HepG2 (cell line): ENCODE measurements at regions of chr14 and their contacts with region 1.

Region 1: DNA sequence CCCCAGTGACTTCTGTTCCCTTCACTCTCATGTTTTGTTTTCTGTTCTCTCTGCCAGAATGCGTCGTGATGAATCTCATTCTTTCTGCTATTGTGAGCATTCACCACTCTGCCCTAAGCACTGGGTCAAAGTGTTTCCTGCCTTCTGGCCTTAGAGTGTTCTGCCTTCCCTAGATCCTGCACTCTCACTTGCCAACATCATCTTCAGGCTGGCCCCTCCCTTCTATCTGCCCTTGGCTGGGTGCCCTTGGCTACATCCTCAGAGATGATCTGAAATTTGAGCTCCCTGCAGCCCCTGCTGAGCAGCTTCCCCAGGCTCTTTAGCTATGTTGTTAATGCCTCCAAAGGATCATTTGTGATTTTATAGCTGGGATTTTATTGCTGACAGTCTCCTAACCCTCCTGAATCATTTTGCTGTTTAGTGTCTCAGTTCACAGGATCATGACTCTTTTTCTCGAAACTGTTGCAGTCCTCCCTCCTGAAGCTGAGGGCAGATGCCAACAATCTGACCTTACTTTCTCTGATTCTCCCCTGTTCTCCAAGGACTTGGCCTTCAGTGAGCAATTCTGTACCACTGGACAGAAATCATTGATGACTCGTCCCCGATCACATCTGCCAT is 4.5 kb downstream of the DHRS2 start:
- DNase-seq: peak; percentile 54
- ATAC-seq: no peak
- H3K4me3 ChIP-seq: peak overlapping the region in 1 of 3 experiments; percentile 74; a peak in 1 of 6 replicates
- H3K27ac ChIP-seq: peak overlapping the region; percentile 59
- H3K4me1 ChIP-seq: peaks cover 65% of the 10 kb centered on the region
- H3K27me3 ChIP-seq: no peaks in the 10 kb centered on the region; a peak in 1 of 5 replicates
- CTCF ChIP-seq: no peak
- EP300 ChIP-seq: no peak
- POLR2A ChIP-seq: peak in 1 of 2 experiments; percentile 77; a peak in 2 of 4 replicates
- RAD21 ChIP-seq: no peak

Region 2: GRCh38 chr14:23544511-23545447 is 95.9 kb before region 1 on chr14:
- CTCF ChIA-PET with region 1: no interaction called
- POLR2A ChIA-PET with region 1: no interaction called
- in situ Hi-C with region 1: no loop called
- intact Hi-C with region 1: no loop called
- DNase-seq: no peak
- ATAC-seq: peak; percentile 21; the same call in 2 of the 3 replicates
- H3K4me3 ChIP-seq: no peak overlapping the region
- H3K27ac ChIP-seq: no peak overlapping the region
- H3K4me1 ChIP-seq: peaks cover 53% of the 10 kb centered on the region
- H3K27me3 ChIP-seq: no peaks in the 10 kb centered on the region
- CTCF ChIP-seq: no peak
- EP300 ChIP-seq: no peak
- POLR2A ChIP-seq: no peak
- RAD21 ChIP-seq: no peak

Region 3: DNA sequence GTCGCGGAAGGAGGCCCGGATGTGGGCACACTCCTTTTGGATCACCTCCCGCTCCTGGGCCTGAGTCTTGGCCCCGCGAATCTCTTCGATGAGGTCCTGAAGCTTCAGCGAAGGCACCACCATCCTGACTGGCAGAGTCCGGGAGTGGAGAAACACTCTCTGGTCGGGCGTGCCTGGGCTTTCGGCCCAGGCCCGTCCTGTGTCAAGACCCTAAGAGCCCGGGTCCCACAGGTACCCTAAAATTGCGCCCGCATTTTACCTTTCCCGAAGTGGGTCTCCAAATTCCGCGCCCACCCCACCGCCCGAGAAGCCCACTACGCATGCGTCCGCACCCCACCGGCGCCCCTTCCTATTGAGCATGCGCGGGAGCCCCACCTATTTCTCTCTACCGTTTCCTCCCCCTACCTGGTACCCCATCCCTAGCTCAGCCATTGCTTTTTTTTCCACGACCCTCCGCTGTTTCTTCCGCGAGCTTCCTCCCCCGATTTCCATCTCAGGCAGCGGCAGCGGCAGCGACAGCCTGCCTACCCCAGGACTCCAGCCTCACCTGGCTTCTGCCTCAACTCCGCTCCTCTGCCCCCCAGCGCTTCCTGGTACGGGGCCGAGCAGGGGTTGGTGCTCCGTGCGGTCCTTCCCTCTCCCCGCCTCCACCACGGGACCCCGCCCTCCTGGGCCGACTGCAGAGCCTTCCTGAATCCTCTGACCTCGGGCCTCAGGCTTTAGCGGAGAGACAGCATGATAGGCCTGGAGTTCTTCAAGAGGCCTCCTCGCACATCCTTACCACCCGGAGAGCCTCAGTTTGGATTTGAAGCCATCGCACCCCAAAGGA is 73.2 kb before region 1 on chr14 and contains the start of gene AP1G2:
- CTCF ChIA-PET with region 1: no interaction called
- POLR2A ChIA-PET with region 1: interaction called, 23 read pairs
- in situ Hi-C with region 1: no loop called
- intact Hi-C with region 1: no loop called
- DNase-seq: peak; percentile 97
- ATAC-seq: peak; percentile 86
- H3K4me3 ChIP-seq: peak within 1 kb of the TSS; percentile 68 to 88 (median 70)
- H3K27ac ChIP-seq: peak within 1 kb of the TSS; percentile 41
- H3K4me1 ChIP-seq: peaks cover 49% of the 10 kb centered on the region
- H3K27me3 ChIP-seq: peaks cover 0 to 8% of the 10 kb centered on the region in 2 experiments; a peak in 1 of 5 replicates
- CTCF ChIP-seq: peak; percentile 50
- EP300 ChIP-seq: peak in 1 of 2 experiments; percentile 54; a peak in 1 of 4 replicates
- POLR2A ChIP-seq: peak in 1 of 2 experiments; percentile 83; a peak in 2 of 4 replicates
- RAD21 ChIP-seq: no peak; the same call in 1 of the 2 replicates
- total RNA-seq, gene AP1G2: 39.4 and 96.9 TPM in 2 replicates

Region 4: DNA sequence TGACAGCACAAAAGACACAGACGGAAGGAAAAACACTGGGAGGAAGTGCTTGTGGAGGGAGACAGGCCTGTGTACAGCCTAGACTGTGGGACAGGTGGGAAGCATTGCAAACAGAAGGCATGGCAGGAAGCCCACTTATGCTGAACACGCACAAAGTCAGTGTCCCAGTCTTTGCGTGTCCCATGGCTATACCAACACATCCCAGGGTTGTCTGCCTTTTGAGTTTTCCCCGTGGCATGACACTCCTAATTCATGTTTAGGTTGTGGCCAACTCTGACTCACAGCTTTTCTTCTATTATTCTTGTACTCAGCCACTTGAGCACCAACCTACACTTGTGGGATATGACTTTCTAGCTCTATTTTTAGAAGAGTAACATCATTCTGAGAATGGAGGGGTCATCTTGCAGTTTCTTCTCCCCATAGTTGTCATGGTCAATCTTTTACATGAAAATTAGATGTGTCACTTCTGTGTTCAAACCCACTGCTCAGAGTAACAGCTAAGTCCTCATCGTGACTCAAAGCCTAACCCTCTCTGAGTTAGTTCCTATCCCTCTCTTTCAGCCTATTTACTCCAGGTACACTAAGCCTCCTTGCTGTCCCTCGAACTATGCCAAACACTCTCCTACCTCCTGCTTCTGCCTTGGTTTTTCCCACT is 34.6 kb before region 1 on chr14:
- CTCF ChIA-PET with region 1: no interaction called
- POLR2A ChIA-PET with region 1: interaction called, 1,105 read pairs
- in situ Hi-C with region 1: no loop called
- intact Hi-C with region 1: no loop called
- DNase-seq: no peak
- ATAC-seq: no peak
- H3K4me3 ChIP-seq: no peak overlapping the region
- H3K27ac ChIP-seq: no peak overlapping the region
- H3K4me1 ChIP-seq: peaks cover 88% of the 10 kb centered on the region
- H3K27me3 ChIP-seq: no peaks in the 10 kb centered on the region
- CTCF ChIP-seq: no peak
- EP300 ChIP-seq: no peak
- POLR2A ChIP-seq: 0 out of 4 replicates have a peak, but pooled peaks of 1 of the 2 experiments have one; percentile 7
- RAD21 ChIP-seq: no peak

Region 5: DNA sequence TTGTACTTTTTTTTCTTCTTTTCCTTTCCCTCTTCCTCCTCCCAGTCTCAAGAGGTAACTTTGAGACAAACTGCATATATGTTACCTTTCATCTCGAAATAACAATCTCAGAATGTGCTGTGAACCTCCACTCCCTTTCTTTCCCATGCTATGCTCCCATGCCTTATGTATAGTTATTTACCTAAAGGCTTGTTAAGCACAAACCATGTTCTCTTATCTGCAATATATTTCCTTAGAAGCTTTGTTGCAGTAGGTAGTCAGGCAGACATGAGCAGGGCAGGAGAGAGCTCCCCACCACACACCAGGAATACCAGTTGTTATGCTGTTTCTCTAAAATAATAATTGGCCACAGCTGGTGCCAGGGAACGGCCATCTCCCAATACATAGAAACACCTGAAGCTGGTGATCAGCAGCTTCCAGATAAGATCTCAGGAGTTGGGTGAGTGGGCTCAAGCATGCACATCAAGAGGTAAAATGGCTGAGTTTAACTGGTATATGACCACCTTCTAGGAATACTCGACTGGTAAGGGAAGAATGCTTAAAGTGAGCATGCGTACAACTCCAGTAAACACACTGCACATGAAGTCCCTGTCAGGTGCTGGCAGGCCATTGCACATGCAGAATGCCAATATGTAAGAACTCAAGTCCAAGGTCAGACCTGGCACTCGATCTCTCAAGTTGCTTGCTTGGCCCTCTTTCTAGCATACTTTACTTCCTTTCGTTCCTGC is 19.3 kb before region 1 on chr14:
- CTCF ChIA-PET with region 1: no interaction called
- POLR2A ChIA-PET with region 1: interaction called, 1,105 read pairs
- in situ Hi-C with region 1: no loop called
- intact Hi-C with region 1: no loop called
- DNase-seq: no peak
- ATAC-seq: peak; percentile 41
- H3K4me3 ChIP-seq: no peak overlapping the region
- H3K27ac ChIP-seq: no peak overlapping the region
- H3K4me1 ChIP-seq: peaks cover 44% of the 10 kb centered on the region
- H3K27me3 ChIP-seq: no peaks in the 10 kb centered on the region
- CTCF ChIP-seq: no peak
- EP300 ChIP-seq: no peak
- POLR2A ChIP-seq: no peak
- RAD21 ChIP-seq: no peak

Region 6: DNA sequence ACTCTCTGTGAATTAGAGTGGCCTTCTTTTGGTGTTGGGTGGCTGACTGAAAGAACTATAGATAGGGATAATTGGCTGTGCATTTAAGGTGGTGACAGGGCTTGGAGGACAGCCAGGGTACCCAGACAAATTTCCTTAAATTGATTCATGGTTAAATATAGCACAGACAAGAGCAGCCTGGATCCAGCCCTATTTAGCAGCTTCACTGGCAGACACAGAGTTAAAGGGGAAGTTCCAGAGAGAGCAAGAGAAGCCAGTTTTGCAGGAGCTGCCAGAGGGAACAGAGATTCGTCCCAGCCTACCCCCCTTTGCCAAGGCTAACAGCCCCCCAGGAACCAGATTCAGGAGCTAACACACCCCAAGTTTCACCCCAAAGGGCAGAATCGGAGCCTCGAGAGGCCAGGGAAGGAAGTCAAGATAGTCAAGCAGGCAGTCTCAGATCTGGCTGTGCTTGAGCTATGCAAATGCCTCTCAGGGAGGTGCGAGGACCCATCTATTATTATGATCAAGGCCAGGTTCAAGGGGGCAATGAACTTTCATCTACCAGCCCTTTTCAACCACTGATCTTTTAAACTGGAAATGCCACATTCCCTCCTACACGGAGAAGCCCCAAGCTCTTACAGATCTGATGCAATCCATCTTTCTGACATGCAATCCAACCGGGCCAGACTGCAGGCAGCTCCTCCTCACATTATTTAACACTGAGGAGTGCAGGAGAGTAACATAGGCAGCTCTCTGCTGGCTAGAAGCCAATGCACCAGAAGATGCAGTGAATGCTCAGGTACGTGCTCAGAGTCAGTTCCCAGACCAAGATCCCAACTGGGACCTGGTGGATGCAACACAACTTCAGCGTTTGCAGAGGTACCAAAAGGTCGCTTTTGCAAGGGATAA is 53.7 kb after region 1 on chr14:
- CTCF ChIA-PET with region 1: no interaction called
- POLR2A ChIA-PET with region 1: interaction called, 60 read pairs
- in situ Hi-C with region 1: no loop called
- intact Hi-C with region 1: no loop called
- DNase-seq: peak; percentile 70
- ATAC-seq: peak; percentile 76
- H3K4me3 ChIP-seq: peak overlapping the region; percentile 14 to 43 (median 25); a peak in 5 of 6 replicates
- H3K27ac ChIP-seq: peak overlapping the region; percentile 37
- H3K4me1 ChIP-seq: peaks cover 65% of the 10 kb centered on the region
- H3K27me3 ChIP-seq: no peaks in the 10 kb centered on the region
- CTCF ChIP-seq: no peak
- EP300 ChIP-seq: peak; percentile 34 to 76; a peak in 3 of 4 replicates
- POLR2A ChIP-seq: no peak
- RAD21 ChIP-seq: no peak

Region 7: DNA sequence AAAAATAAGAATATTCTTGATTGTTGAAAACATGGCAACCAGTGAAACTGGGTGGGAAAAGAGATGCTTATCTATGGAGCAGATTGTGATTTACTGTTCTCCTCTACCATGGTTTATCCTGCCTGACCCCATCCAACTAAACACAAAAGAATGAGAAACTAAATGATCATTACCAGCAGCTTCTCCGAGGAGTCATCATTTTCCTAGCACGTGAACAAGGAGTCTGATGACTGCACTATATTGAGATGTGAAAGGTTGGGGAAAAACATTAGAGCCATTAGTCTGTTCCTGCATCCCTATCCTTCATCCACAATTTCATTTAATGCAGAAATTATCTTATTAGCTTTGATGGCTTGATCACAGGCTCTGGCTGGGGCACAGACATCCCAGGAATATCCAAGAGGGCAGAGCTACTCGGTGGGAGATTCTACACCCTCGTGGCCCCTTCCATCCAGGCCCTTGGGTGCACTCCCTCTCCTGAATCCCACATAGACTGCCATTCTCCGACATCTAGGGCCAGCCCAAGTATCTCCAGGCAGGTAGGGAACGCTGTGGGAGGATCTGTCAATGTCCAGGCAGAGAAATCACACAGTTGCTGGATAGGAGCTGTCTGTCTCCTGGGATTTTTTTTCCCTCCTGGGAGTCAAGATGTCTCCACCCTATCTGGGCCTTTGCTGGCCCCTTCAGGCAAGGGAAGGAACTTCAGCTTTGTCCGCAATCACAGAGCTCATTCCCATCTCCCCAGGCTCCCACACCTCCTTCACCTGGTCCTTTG is 269.7 kb after region 1 on chr14:
- CTCF ChIA-PET with region 1: no interaction called
- POLR2A ChIA-PET with region 1: interaction called, 19 read pairs
- in situ Hi-C with region 1: no loop called
- intact Hi-C with region 1: no loop called
- DNase-seq: peak; percentile 81
- ATAC-seq: peak; percentile 96
- H3K4me3 ChIP-seq: no peak overlapping the region
- H3K27ac ChIP-seq: no peak overlapping the region
- H3K4me1 ChIP-seq: no peaks in the 10 kb centered on the region
- H3K27me3 ChIP-seq: peaks cover 0 to 2% of the 10 kb centered on the region in 2 experiments; a peak in 1 of 5 replicates
- CTCF ChIP-seq: peak; percentile 98
- EP300 ChIP-seq: no peak
- POLR2A ChIP-seq: no peak
- RAD21 ChIP-seq: peak; percentile 97